ENCODE measurements at regions of chr12 and their contacts with region 1.

Region 1: DNA sequence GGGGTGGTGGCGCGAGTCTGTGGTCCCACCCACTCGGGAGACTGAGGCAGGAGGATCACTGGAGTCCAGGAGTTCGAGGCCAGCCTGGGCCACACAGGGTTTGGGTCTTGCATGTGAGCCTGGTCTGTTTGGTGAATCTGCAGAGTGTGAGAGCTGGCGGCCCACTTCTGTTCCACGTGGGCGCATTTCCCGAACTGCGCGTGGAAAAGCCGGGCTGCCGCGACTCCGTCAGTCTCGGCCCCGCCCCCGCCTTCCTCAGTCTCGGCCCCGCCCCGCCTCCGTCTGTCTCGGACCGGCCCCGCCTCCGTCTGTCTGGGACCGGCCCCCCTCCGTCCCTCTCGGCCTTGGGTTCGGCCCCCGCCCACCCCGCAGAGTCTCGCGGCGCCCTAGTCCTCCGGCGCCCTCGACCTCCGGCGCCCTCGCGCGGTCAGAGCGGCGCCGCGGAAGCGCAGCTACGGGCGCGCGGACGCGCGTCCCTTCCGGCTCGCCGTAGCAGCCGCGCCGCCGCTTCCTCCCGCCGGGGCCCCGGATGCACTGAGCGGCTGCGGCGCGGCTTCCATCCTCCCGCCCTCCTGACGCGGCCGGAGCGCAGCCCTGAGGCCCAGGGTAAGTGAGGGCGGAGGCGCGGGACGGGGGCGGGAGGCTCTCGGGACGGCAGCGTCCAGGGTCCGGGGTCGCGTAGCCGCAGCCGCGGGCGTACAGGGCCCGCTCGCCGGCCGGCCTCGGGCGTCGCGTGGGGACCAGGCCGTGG is at the start of gene EP400:
- DNase-seq: peak; percentile 92
- H3K4me3 ChIP-seq: peak within 1 kb of the TSS; percentile 50 to 82 (median 77)
- H3K27ac ChIP-seq: peak within 1 kb of the TSS; percentile 82
- H3K4me1 ChIP-seq: peaks cover 5% of the 10 kb centered on the region
- H3K27me3 ChIP-seq: no peaks in the 10 kb centered on the region
- CTCF ChIP-seq: peak; percentile 21 to 27
- POLR2A ChIP-seq: peak; percentile 69
- total RNA-seq, gene EP400: 57.3 and 57.7 TPM in 2 replicates

Region 2: DNA sequence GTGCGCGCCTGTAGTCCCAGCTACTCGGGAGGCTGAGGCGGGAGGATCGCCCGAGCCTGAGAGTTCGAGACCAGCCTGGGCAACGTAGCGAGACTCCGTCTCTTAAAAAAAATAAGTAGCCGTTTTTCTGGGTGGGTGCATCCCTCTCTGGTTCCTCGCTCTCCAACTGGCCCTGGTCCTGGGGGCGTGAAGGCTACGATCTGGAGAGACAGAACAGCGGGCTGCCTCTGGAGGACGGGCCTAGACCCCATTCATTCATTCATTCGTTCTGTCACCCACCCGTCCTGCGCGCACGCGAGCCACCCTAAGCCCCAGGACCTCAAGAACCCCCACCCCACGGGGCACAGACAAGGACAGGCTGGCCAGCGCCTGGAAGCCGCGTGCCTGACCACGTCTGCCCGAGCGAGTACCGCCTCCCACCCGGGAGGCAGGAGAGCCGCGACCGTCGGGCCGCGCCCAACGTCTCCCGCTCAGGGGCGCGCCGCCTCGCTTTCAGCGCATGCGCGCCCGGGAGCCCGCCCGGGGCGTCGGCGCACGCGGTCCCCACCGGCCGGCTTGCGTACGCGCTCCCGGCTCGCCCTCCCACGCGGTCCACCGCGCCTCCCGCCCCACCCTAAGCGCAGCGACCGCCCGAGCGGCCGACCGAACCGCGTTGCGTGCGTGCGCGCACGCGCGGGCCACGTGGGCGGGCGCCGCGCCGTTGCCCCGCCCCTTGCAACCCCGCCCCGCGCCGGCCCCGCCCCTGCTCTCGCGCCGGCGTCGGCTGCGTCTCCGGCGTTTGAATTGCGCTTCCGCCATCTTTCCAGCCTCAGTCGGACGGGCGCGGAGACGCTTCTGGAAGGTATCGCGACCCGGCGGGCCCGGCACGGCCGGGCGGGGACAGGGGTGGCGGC is 1078.1 kb before region 1 on chr12 and contains the start of gene RAN:
- CTCF ChIA-PET with region 1: no interaction called
- POLR2A ChIA-PET with region 1: no interaction called
- dilution Hi-C with region 1: no loop called
- intact Hi-C with region 1: loop called (anchors 5 kb)
- DNase-seq: peak; percentile 89
- H3K4me3 ChIP-seq: peak within 1 kb of the TSS; percentile 69 to 99 (median 96)
- H3K27ac ChIP-seq: peak within 1 kb of the TSS; percentile 70
- H3K4me1 ChIP-seq: peaks cover 23% of the 10 kb centered on the region
- H3K27me3 ChIP-seq: no peaks in the 10 kb centered on the region
- CTCF ChIP-seq: no peak
- POLR2A ChIP-seq: peak; percentile 89
- total RNA-seq, gene RAN: 1,205 and 1,212 TPM in 2 replicates

Region 3: GRCh38 chr12:131710464-131711457 is 238.8 kb before region 1 on chr12 and contains the start of gene SFSWAP:
- CTCF ChIA-PET with region 1: no interaction called
- POLR2A ChIA-PET with region 1: no interaction called
- dilution Hi-C with region 1: no loop called
- intact Hi-C with region 1: loop called (anchors 2 kb)
- DNase-seq: peak; percentile 80
- H3K4me3 ChIP-seq: peak within 1 kb of the TSS; percentile 56 to 81 (median 60)
- H3K27ac ChIP-seq: peak within 1 kb of the TSS; percentile 98
- H3K4me1 ChIP-seq: peaks cover 16% of the 10 kb centered on the region
- H3K27me3 ChIP-seq: no peaks in the 10 kb centered on the region
- CTCF ChIP-seq: no peak
- POLR2A ChIP-seq: peak; percentile 79
- total RNA-seq, gene SFSWAP: 53.1 and 53.3 TPM in 2 replicates

Region 4: DNA sequence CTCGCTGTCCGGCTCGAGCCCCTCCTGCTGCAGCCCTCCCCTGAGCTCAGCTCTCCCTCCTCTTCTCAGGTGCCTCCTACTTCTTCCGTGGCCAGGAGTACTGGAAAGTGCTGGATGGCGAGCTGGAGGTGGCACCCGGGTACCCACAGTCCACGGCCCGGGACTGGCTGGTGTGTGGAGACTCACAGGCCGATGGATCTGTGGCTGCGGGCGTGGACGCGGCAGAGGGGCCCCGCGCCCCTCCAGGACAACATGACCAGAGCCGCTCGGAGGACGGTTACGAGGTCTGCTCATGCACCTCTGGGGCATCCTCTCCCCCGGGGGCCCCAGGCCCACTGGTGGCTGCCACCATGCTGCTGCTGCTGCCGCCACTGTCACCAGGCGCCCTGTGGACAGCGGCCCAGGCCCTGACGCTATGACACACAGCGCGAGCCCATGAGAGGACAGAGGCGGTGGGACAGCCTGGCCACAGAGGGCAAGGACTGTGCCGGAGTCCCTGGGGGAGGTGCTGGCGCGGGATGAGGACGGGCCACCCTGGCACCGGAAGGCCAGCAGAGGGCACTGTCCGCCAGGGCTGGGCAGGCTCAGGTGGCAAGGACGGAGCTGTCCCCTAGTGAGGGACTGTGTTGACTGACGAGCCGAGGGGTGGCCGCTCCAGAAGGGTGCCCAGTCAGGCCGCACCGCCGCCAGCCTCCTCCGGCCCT is 98.6 kb before region 1 on chr12:
- CTCF ChIA-PET with region 1: interaction called, 4 read pairs
- POLR2A ChIA-PET with region 1: no interaction called
- dilution Hi-C with region 1: no loop called
- intact Hi-C with region 1: loop called (anchors 1 kb)
- DNase-seq: no peak
- H3K4me3 ChIP-seq: no peak overlapping the region
- H3K27ac ChIP-seq: no peak overlapping the region
- H3K4me1 ChIP-seq: no peaks in the 10 kb centered on the region
- H3K27me3 ChIP-seq: no peaks in the 10 kb centered on the region
- CTCF ChIP-seq: no peak
- POLR2A ChIP-seq: no peak

Region 5: DNA sequence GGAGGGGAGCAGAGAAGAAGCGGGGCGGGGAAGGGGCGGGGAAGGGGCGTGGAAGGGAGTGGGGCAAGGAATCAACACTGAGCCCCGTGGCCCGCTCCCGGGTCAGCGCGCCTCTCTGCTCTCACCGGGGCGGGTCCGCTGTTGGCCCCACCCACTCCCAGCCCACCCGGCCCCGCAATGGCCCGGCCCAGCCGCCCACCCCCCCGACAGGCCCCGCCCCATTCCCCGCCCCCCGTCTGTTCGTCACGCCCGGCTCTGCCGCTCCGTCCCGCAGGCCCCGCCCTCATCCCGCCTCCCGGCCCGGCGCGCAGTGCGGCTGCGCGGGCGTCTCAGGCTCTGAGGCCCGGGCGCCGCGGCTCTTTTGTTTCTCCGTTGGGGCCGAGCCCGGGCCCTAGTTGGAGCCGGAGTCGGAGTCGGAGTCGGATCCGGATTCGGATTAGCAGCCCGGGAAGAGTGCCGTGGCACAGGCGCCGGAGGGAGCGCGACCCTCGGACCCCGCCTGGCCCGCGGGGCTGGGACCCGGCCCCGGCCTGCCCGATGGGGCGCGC is 55.2 kb before region 1 on chr12 and contains the start of gene ULK1:
- CTCF ChIA-PET with region 1: no interaction called
- POLR2A ChIA-PET with region 1: no interaction called
- dilution Hi-C with region 1: no loop called
- intact Hi-C with region 1: loop called (anchors 1 kb)
- DNase-seq: peak; percentile 79
- H3K4me3 ChIP-seq: peak within 1 kb of the TSS; percentile 37 to 56 (median 52)
- H3K27ac ChIP-seq: peak within 1 kb of the TSS; percentile 60
- H3K4me1 ChIP-seq: peaks cover 9% of the 10 kb centered on the region
- H3K27me3 ChIP-seq: peaks cover 0 to 3% of the 10 kb centered on the region in 2 experiments
- CTCF ChIP-seq: no peak
- POLR2A ChIP-seq: peak; percentile 92
- total RNA-seq, gene ULK1: 37.8 and 38.2 TPM in 2 replicates

Region 6: DNA sequence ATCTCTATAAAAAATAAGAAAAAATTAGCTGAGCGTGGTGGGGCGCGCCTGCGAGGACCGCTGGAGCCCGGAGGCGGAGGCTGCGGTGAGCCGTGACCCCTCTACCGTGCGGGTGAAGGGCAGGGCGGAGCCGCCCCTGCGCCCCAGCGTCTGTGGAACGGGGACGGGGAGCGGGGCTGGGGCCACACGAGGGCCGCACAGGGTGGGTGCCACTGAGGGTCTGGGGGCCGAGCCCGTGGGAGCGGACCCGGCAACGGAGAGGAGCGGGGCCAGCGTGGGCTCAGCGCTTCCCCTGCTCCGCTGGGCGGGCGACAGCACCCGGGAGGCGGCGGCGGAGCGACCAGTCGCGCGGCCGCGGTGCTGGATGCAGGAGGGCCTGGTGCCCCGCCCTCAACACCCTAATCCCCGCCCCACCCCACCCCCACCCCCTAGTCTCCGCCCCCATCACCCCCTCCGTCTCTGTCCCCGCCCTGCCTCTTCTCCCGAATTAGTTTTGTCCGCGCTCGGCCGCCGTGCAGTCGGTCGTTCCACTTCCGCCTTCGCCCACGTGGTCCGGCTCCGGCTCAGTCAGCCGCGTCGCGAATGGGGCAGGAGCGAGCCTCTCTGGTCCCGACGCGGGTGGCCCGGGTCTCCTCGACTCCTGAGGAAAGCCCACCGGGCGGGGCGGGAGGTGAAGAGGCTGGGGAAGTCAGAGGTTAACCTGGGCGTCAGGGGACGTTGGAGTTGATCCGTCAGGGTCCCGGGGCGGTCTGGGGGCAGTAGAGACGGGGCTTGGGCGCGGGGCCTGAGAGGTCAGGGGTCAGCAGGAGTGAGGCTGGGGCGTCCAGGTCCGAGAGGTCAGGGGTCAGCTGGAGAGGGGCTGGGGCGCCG is 20.7 kb before region 1 on chr12 and contains the start of gene PUS1:
- CTCF ChIA-PET with region 1: interaction called, 4 read pairs
- POLR2A ChIA-PET with region 1: no interaction called
- dilution Hi-C with region 1: no loop called
- intact Hi-C with region 1: loop called (anchors 1 kb)
- DNase-seq: peak; percentile 90
- H3K4me3 ChIP-seq: peak within 1 kb of the TSS; percentile 79 to 96 (median 96)
- H3K27ac ChIP-seq: peak within 1 kb of the TSS; percentile 57
- H3K4me1 ChIP-seq: peaks cover 8% of the 10 kb centered on the region
- H3K27me3 ChIP-seq: no peaks in the 10 kb centered on the region
- CTCF ChIP-seq: no peak
- POLR2A ChIP-seq: peak; percentile 73
- total RNA-seq, gene PUS1: 47.9 and 52.2 TPM in 2 replicates

Region 7: DNA sequence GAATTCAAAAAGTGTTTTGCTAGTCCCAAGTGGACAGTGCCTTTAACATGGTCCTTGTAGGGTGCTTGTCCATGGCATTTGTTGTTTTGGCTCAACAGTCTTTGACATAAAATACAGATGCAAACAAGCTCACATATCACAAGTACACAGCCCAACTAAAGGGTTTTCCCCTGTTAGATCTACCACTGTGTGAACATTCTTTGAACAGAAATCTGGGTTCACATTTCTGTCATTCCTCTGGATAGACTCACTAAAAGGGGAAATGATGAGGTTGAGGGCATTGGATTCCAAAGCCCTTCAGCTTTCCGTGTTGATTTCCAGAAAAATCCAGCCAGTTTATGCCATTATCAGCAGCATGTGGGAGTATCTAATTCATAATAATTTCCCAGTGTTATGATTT is 54.2 kb after region 1 on chr12:
- CTCF ChIA-PET with region 1: no interaction called
- POLR2A ChIA-PET with region 1: no interaction called
- dilution Hi-C with region 1: no loop called
- intact Hi-C with region 1: loop called (anchors 1 kb)
- DNase-seq: peak; percentile 62
- H3K4me3 ChIP-seq: no peak overlapping the region
- H3K27ac ChIP-seq: peak overlapping the region; percentile 76
- H3K4me1 ChIP-seq: peaks cover 8% of the 10 kb centered on the region
- H3K27me3 ChIP-seq: no peaks in the 10 kb centered on the region
- CTCF ChIP-seq: no peak
- POLR2A ChIP-seq: no peak